HEK293 (cell line): ENCODE measurements at regions of chr19 and their contacts with region 1.

Region 1: GRCh38 chr19:46704379-46705076 is 12.4 kb downstream of the PRKD2 start:
- H3K4me3 ChIP-seq: no peak overlapping the region
- H3K27ac ChIP-seq: no peak overlapping the region
- H3K4me1 ChIP-seq: no peaks in the 10 kb centered on the region
- CTCF ChIP-seq: peak; percentile 91

Region 2: DNA sequence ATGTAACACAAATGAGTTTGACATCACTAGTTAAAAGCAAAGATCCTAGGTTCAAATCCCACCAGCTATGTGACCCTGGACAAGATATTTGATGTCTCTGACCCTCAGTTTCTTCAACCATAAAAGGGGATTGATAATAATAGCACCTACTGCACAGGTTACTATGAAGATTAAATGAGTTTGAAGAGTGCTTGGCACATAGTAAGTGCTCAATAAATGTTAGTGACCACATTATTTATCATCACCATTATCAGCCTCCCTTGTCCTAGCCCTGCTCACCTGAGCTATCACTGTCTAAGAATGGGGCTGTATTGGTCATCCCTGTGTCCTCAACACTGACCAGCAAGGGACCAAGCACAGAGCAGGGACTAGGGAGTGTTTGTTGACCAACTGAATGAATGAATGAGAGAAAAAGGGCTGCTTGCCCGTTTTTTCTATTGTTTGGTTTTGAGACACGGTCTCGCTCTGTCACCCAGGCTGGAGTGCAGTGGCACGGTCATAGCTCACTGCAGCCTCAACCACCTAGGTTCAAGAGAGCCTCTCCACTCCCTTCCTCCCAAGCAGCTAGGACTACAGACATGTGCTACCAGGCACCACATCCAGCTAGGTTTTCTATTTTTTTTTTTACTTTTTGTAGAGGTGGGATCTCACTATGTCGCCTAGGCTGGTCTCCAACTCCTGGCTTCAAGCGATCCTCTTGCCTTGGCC is 16.9 kb before region 1 on chr19:
- CTCF ChIA-PET with region 1: interaction called, 30 read pairs
- POLR2A ChIA-PET with region 1: no interaction called
- H3K4me3 ChIP-seq: no peak overlapping the region
- H3K27ac ChIP-seq: no peak overlapping the region
- H3K4me1 ChIP-seq: no peaks in the 10 kb centered on the region
- CTCF ChIP-seq: no peak

Region 3: GRCh38 chr19:46692918-46693722 is 11.4 kb before region 1 on chr19:
- CTCF ChIA-PET with region 1: interaction called, 30 read pairs
- POLR2A ChIA-PET with region 1: no interaction called
- H3K4me3 ChIP-seq: no peak overlapping the region
- H3K27ac ChIP-seq: no peak overlapping the region
- H3K4me1 ChIP-seq: no peaks in the 10 kb centered on the region
- CTCF ChIP-seq: no peak

Region 4: GRCh38 chr19:46759817-46760333 is 55.3 kb after region 1 on chr19:
- CTCF ChIA-PET with region 1: interaction called, 12 read pairs
- POLR2A ChIA-PET with region 1: no interaction called
- H3K4me3 ChIP-seq: no peak overlapping the region
- H3K27ac ChIP-seq: no peak overlapping the region
- H3K4me1 ChIP-seq: peaks cover 3% of the 10 kb centered on the region
- CTCF ChIP-seq: no peak